ENCODE measurements at regions of chr6 and their contacts with region 1.

Region 1: DNA sequence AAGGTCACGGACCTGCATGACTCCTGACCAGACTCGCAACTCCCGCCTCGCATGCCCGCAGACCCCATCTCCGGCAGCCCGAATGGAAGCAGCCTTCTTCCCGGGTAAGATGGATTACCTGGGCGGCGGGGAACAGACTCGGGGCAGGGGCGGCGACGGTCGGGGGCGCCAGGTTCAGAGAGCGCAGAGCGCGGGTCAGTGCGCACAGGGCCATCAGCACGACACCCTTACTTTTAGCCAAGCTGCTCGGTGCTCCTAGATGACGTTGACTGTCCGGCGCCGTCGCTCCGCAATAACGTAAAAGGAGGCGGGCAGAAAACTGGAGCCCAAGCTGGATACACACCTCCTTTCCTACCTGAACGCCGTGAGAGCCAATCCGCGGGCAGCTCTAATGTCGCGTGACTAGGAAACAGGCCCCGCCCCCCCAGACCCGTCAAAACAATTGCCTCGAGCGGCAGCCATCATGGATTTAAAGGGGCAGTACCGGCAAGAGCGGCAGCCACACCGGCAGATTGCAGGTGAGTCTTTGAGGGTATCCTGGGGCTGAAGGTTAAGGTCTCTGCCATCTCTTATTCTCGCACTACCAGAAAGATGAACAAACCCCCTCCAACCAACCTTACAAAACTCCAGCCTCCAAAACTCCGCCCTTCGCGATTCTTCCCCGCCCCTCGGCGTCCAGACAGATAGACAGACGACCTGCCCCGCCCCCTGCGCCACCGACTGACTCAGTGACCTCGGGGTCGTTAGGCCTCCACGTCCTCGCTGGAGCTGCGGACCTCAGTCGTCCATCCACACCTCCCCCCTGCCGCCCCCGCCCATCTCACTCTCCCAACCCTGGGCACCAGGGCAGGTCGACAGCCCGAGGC is at the starts of genes KLC4 and MRPL2:
- DNase-seq: peak; percentile 96
- H3K4me3 Mint-ChIP-seq: peak within 1 kb of the TSS; percentile 96
- H3K27ac Mint-ChIP-seq: peak within 1 kb of the TSS; percentile 98
- H3K4me1 Mint-ChIP-seq: peaks cover 41% of the 10 kb centered on the region
- H3K27me3 Mint-ChIP-seq: no peaks in the 10 kb centered on the region
- total RNA-seq, gene KLC4: 12.7 and 13.7 TPM in 2 replicates
- total RNA-seq, gene MRPL2: 89.6 and 97.4 TPM in 2 replicates

Region 2: GRCh38 chr6:41895300-41896233 is 1163.8 kb before region 1 on chr6 and contains the start of gene USP49:
- intact Hi-C with region 1: loop called (anchors 5 kb)
- DNase-seq: peak; percentile 84
- H3K4me3 Mint-ChIP-seq: no peak within 1 kb of the TSS
- H3K27ac Mint-ChIP-seq: peak within 1 kb of the TSS; percentile 97
- H3K4me1 Mint-ChIP-seq: peaks cover 10% of the 10 kb centered on the region
- H3K27me3 Mint-ChIP-seq: no peaks in the 10 kb centered on the region
- total RNA-seq, gene USP49: 4.8 and 5.3 TPM in 2 replicates

Region 3: DNA sequence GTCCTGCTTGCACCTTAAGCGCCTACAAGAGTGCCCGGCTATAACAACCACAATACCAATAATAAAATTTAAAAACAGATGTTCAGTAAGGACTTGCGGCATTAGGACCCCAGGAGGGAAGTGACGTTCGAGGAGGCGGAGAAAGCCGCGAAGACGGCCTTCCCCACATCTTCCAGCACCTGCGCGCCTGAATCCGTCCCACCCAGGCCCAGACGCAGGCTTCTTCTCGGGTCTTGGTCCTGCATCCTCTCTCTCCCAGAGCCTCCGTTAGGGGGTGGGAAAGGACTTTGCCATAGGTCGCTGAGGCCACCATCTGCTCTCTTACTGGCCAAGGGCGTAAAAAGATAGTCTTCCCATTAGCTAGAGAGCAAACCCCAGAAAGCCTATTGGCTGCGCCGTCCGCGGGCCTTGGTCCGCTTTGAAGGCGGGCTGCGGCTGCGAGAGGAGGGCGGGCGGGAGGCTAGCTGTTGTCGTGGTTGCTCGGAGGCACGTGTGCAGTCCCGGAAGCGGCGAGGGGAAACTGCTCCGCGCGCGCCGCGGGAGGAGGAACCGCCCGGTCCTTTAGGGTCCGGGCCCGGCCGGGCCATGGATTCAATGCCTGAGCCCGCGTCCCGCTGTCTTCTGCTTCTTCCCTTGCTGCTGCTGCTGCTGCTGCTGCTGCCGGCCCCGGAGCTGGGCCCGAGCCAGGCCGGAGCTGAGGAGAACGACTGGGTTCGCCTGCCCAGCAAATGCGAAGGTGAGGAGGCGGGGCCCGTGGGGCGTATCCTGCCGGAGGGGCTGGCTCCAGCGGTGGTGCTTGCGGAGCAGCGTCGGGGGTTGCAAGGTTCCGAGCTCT is 130.2 kb before region 1 on chr6 and contains the start of gene CNPY3:
- intact Hi-C with region 1: loop called (anchors 1 kb)
- DNase-seq: peak; percentile 93
- H3K4me3 Mint-ChIP-seq: peak within 1 kb of the TSS; percentile 99
- H3K27ac Mint-ChIP-seq: peak within 1 kb of the TSS; percentile 98
- H3K4me1 Mint-ChIP-seq: peaks cover 38% of the 10 kb centered on the region
- H3K27me3 Mint-ChIP-seq: no peaks in the 10 kb centered on the region
- total RNA-seq, gene CNPY3: 47.2 and 49.2 TPM in 2 replicates

Region 4: GRCh38 chr6:42984001-42984923 is 75.1 kb before region 1 on chr6 and contains the start of gene PPP2R5D:
- intact Hi-C with region 1: loop called (anchors 1 kb)
- DNase-seq: peak; percentile 97
- H3K4me3 Mint-ChIP-seq: peak within 1 kb of the TSS; percentile 92
- H3K27ac Mint-ChIP-seq: peak within 1 kb of the TSS; percentile 94
- H3K4me1 Mint-ChIP-seq: peaks cover 57% of the 10 kb centered on the region
- H3K27me3 Mint-ChIP-seq: no peaks in the 10 kb centered on the region
- total RNA-seq, gene PPP2R5D: 52.1 and 53.4 TPM in 2 replicates

Region 5: GRCh38 chr6:43228951-43229802 is 169.8 kb after region 1 on chr6 and contains the start of gene DNPH1:
- intact Hi-C with region 1: loop called (anchors 5 kb)
- DNase-seq: peak; percentile 78
- H3K4me3 Mint-ChIP-seq: peak within 1 kb of the TSS; percentile 92
- H3K27ac Mint-ChIP-seq: peak within 1 kb of the TSS; percentile 89
- H3K4me1 Mint-ChIP-seq: peaks cover 47% of the 10 kb centered on the region
- H3K27me3 Mint-ChIP-seq: peaks cover 22% of the 10 kb centered on the region
- total RNA-seq, gene DNPH1: 65.8 and 71.6 TPM in 2 replicates

Region 6: GRCh38 chr6:43477235-43478007 is 418.0 kb after region 1 on chr6 and contains the start of gene TJAP1:
- intact Hi-C with region 1: loop called (anchors 2 kb)
- DNase-seq: peak; percentile 94
- H3K4me3 Mint-ChIP-seq: peak within 1 kb of the TSS; percentile 97
- H3K27ac Mint-ChIP-seq: peak within 1 kb of the TSS; percentile 97
- H3K4me1 Mint-ChIP-seq: peaks cover 33% of the 10 kb centered on the region
- H3K27me3 Mint-ChIP-seq: no peaks in the 10 kb centered on the region
- total RNA-seq, gene TJAP1: 43.4 and 48.2 TPM in 2 replicates